ENCODE measurements at regions of chr12 and their contacts with region 1.

Region 1: GRCh38 chr12:14454098-14454907 is 88.8 kb downstream of the ATF7IP start:
- DNase-seq: peak; percentile 80
- H3K4me3 Mint-ChIP-seq: peak overlapping the region; percentile 39
- H3K27ac Mint-ChIP-seq: peak overlapping the region; percentile 69
- H3K4me1 Mint-ChIP-seq: peaks cover 47% of the 10 kb centered on the region
- H3K27me3 Mint-ChIP-seq: no peaks in the 10 kb centered on the region

Region 2: GRCh38 chr12:14417715-14418114 is 36.6 kb before region 1 on chr12:
- intact Hi-C with region 1: loop called (anchors 5 kb)
- DNase-seq: peak; percentile 90
- H3K4me3 Mint-ChIP-seq: peak overlapping the region; percentile 62
- H3K27ac Mint-ChIP-seq: peak overlapping the region; percentile 85
- H3K4me1 Mint-ChIP-seq: peaks cover 37% of the 10 kb centered on the region
- H3K27me3 Mint-ChIP-seq: no peaks in the 10 kb centered on the region